H1 (cell line): ENCODE measurements at regions of chr1 and their contacts with region 1.

Region 1: DNA sequence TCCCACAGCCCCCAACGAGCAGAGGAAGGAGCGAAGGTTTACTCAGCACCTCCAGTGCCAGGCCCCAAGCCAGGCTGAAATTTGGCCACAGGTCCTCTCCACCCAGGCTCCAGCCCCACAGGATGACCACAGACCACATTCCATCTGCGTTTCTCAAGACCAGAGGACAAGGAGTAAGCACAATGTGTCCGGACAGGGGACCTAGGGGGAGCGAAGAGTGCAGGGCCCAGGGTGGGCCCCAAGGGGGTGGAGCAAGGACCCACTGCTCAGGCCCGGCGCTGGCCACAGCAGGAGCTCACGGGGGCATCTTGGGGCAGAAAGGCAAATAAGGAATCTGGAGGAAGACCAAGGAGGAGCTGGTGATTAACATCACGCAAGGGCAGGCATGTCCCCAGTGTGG is 100.5 kb downstream of the NPHP4 start:
- DNase-seq: no peak
- H3K4me3 ChIP-seq: no peak overlapping the region
- H3K27ac ChIP-seq: no peak overlapping the region
- H3K4me1 ChIP-seq: peaks cover 2 to 8% (median 5%) of the 10 kb centered on the region in 4 experiments; a peak in 5 of 7 replicates
- H3K27me3 ChIP-seq: no peaks in the 10 kb centered on the region
- CTCF ChIP-seq: no peak
- EP300 ChIP-seq: no peak
- POLR2A ChIP-seq: no peak
- RAD21 ChIP-seq: no peak

Region 2: DNA sequence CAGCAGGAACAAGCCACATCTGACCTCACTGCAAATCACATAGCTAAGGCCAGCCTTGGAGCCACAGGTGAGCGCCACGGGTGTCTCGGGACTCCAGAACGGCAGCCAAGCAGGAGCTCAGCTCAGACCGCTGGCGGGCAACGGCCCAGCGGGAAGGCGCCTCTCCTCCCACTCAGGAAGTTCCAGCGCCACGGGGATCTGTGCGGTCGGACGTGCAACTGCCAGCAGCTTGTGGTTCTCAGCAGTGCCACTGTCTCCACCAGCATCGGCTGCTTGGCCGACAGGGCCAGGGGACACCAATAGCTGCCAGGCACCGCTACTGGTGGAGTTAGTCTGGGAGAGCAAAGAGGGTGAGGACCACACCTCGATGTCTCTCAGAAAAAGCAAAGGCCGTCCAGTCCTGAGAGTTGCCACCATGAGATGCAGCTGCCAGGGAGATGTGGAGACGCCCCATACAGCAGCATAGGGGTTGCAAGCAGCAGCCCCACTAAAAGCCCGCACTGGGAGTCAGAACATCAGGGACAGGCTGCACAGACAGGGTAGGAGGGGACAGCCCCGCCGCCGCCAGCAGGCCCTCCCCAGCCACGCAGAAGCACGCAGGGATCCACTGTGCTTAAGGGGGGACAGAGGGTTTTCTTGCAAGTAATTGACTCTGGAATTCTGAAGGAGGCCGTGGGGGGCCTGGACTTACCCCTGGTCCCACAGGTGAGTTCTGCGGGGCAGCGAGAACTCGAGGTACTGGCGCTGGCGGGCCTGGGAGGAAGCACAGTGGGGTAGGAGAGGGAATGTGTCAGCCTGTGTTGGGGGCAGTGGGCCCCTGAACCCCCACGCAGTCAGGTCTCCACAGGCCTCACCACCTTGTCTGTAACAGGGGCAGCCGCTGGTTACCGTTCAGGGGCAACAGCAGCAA is 17.0 kb after region 1 on chr1:
- CTCF ChIA-PET with region 1: interaction called, 24 read pairs
- POLR2A ChIA-PET with region 1: interaction called, 9 read pairs
- DNase-seq: peak in 1 of 2 experiments; percentile 42
- H3K4me3 ChIP-seq: no peak overlapping the region
- H3K27ac ChIP-seq: no peak overlapping the region
- H3K4me1 ChIP-seq: 0 out of 7 replicates have a peak, but pooled peaks cover 0 to 3% (median 0%) of the 10 kb centered on the region in 4 experiments
- H3K27me3 ChIP-seq: no peaks in the 10 kb centered on the region
- CTCF ChIP-seq: no peak
- EP300 ChIP-seq: no peak
- POLR2A ChIP-seq: no peak
- RAD21 ChIP-seq: no peak